ENCODE measurements at regions of chr6 and their contacts with region 1.

Region 1: DNA sequence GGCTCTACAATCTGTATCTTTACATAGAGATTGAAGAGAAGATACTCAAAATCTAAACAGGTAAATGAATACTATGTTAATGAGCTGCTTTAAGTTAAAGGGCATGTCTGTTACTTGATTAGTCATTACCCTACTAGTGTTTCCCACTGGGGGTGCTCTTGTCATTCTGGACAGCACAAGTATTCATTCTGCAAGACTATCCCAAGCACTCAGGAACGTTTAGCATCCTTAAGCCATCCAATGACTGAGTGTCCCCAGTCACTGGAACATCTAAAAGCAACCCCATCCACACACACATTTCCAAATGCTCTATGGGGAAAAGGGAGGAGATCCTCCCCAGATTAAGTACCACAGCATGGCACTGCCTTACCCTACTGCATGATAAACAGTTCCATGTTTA is 25.7 kb downstream of the EZR start:
- DNase-seq: peak in 1 of 10 donors; percentile 45
- ATAC-seq: peak; percentile 16 to 17
- H3K4me3 Mint-ChIP-seq: peak overlapping the region in 3 of 10 donors; percentile 20 to 37 (median 28)
- H3K27ac Mint-ChIP-seq: peak overlapping the region in 5 of 10 donors; percentile 53 to 90 (median 72)
- H3K4me1 Mint-ChIP-seq: peaks cover 38 to 90% (median 78%) of the 10 kb centered on the region in 4 donors
- H3K27me3 Mint-ChIP-seq: no peaks in the 10 kb centered on the region

Region 2: DNA sequence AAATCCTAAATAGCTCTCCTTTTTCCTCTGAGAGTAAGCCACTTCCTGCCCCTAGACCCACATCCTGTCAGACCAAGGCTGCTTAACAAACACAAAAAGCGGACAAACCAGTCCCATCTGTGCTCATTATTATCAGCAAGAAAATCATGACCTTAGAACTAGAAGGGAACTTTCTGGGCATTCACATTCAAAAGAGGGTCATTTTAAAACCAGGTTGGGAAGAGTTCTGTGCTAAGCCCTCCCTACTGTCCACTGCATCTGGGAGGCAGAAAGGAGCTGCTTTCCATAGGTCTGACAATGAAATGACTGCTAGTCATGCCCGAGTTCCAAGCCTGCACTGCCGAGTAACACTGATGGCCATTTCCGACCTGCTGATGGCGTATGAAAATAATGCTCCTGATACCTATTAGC is 10.3 kb after region 1 on chr6:
- POLR2A ChIA-PET with region 1: interaction called, 13 read pairs
- DNase-seq: peak in 6 of 10 donors; percentile 35 to 67 (median 52)
- ATAC-seq: peak; percentile 47 to 66
- H3K4me3 Mint-ChIP-seq: peak overlapping the region; percentile 62 to 86 (median 80)
- H3K27ac Mint-ChIP-seq: peak overlapping the region; percentile 77 to 97 (median 88)
- H3K4me1 Mint-ChIP-seq: peaks cover 47 to 96% (median 92%) of the 10 kb centered on the region in 4 donors
- H3K27me3 Mint-ChIP-seq: no peaks in the 10 kb centered on the region

Region 3: GRCh38 chr6:158808941-158809678 is 15.7 kb after region 1 on chr6:
- POLR2A ChIA-PET with region 1: interaction called, 13 read pairs
- DNase-seq: peak in 5 of 10 donors; percentile 48 to 76 (median 54)
- ATAC-seq: peak; percentile 62 to 72
- H3K4me3 Mint-ChIP-seq: peak overlapping the region in 9 of 10 donors; percentile 41 to 76 (median 63)
- H3K27ac Mint-ChIP-seq: peak overlapping the region; percentile 67 to 97 (median 85)
- H3K4me1 Mint-ChIP-seq: peaks cover 52 to 98% (median 96%) of the 10 kb centered on the region in 4 donors
- H3K27me3 Mint-ChIP-seq: no peaks in the 10 kb centered on the region

Measured in naive thymus-derived CD8-positive, alpha-beta T cell (primary cell).